Gastrocnemius medialis (tissue), 4 donors: ENCODE measurements at regions of chr12 and their contacts with region 1.

Region 1: DNA sequence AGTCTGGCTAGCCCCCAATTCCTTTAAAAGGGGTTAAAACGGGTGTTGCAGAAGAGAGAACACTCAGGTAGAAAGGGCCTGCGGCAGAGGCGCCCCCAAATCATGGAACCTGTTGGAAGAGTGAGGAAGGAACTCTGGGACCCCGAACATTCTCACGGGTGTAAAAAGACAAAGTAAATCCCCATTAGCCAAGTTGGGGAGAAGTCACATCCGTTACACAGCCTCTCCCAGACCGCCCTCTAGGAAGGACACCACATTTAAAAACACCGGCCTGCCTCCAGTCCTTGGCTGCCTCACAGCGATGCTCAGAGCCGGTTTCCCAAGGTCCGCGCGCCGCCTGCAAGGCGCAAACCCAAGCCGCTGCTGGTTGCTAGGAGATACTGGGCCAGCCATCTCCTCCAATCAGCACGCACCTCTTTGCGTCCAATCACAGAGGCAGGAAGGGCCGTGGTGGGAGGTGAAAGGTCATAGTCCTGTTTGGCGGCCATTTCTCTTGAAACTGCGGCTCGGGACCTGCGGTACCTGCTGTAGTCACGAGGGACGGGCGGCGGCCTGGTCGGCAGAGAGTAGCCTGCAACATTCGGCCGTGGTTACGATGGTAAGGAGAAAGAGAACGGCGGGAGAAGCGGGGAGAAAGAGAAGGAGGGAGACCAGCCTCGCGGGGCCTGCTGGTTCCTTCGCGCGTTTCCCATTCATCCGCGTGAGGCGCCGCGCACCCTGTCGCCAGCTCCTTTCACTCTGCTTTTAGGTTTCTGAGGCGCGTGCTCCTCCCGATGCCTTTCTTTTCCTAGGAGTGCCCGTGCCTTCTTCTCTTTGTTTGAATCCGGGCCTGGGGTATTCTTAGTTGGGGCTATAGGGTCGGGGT is at the start of gene SNRPF:
- DNase-seq: peak; percentile 94 to 95
- ATAC-seq: peak; percentile 100
- H3K4me3 ChIP-seq: peak within 1 kb of the TSS; percentile 68 to 80 (median 79)
- H3K27ac ChIP-seq: peak within 1 kb of the TSS; percentile 73 to 83 (median 78)
- H3K4me1 ChIP-seq: peaks cover 18% of the 10 kb centered on the region in 2 donors
- H3K27me3 ChIP-seq: no peaks in the 10 kb centered on the region
- CTCF ChIP-seq: peak in 3 of 5 experiments; percentile 18 to 35 (median 31)
- POLR2A ChIP-seq: peak in 1 of 2 donors; percentile 21
- total RNA-seq, gene SNRPF: 2.3 to 4.6 (median 3.4) TPM

Region 2: GRCh38 chr12:95820102-95820703 is 38.5 kb before region 1 on chr12:
- in situ Hi-C with region 1: no loop called
- intact Hi-C with region 1: loop called (anchors 1 kb)
- DNase-seq: no peak
- ATAC-seq: no peak
- H3K4me3 ChIP-seq: no peak overlapping the region
- H3K27ac ChIP-seq: no peak overlapping the region
- H3K4me1 ChIP-seq: no peaks in the 10 kb centered on the region
- H3K27me3 ChIP-seq: no peaks in the 10 kb centered on the region
- CTCF ChIP-seq: peak in 3 of 5 experiments; percentile 17 to 46 (median 45)
- POLR2A ChIP-seq: no peak

Region 3: DNA sequence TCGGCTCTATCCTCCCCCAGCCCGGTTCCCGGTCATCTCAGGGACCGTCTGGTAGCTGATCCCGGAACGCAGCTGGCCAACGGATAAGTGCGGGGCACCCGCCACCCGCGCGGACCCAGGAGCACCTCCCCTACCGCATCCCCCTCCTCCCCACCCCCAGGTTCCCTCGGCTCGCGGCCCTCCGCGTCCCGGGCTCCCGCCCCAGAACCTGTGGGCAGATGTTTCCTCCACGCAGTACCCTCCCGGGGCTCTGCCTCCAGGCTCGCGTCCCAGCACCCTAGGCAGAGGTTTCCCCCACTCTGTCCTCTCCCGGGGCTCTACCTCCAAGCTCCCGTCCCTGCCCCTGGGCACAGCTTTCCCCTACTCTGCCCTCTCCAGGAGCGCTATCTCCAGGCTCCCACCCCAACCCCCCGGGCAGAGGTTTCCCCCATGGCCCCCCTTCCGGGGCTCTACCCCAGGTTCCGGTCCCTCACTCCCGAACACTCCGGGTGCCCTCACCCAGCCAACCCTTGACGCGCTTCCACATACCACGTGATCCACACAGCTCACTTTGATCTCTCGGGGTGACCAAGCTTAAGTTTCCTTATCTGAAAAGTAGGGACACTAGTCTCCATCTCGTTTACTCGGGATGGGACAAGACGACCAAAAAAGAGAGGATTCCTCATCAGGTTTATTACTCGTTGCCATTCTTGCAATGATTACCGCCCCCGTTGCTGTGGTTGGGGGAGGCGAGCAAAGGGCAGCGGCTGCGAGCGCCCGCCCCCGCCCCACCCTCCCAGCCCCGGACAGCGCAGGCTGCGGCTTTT is 84.0 kb after region 1 on chr12 and contains the start of gene CCDC38:
- in situ Hi-C with region 1: no loop called
- intact Hi-C with region 1: loop called (anchors 2 kb)
- DNase-seq: peak; percentile 41 to 76
- ATAC-seq: peak; percentile 95 to 96
- H3K4me3 ChIP-seq: peak within 1 kb of the TSS; percentile 68 to 90 (median 74)
- H3K27ac ChIP-seq: peak within 1 kb of the TSS; percentile 79 to 88 (median 83)
- H3K4me1 ChIP-seq: peaks cover 4 to 9% of the 10 kb centered on the region in 2 donors
- H3K27me3 ChIP-seq: no peaks in the 10 kb centered on the region
- CTCF ChIP-seq: no peak
- POLR2A ChIP-seq: peak in 1 of 2 donors; percentile 25
- total RNA-seq, gene CCDC38: not detected

Region 4: GRCh38 chr12:96035278-96036236 is 176.8 kb after region 1 on chr12 and contains the start of gene LTA4H:
- in situ Hi-C with region 1: no loop called
- intact Hi-C with region 1: loop called (anchors 2 kb)
- DNase-seq: peak; percentile 94 to 96
- ATAC-seq: peak; percentile 96 to 98
- H3K4me3 ChIP-seq: peak within 1 kb of the TSS; percentile 69 to 97 (median 89)
- H3K27ac ChIP-seq: peak within 1 kb of the TSS; percentile 80 to 90 (median 84)
- H3K4me1 ChIP-seq: peaks cover 15 to 18% of the 10 kb centered on the region in 2 donors
- H3K27me3 ChIP-seq: no peaks in the 10 kb centered on the region
- CTCF ChIP-seq: no peak
- POLR2A ChIP-seq: peak; percentile 58 to 76
- total RNA-seq, gene LTA4H: 36.7 to 46.9 (median 40.6) TPM

Region 5: DNA sequence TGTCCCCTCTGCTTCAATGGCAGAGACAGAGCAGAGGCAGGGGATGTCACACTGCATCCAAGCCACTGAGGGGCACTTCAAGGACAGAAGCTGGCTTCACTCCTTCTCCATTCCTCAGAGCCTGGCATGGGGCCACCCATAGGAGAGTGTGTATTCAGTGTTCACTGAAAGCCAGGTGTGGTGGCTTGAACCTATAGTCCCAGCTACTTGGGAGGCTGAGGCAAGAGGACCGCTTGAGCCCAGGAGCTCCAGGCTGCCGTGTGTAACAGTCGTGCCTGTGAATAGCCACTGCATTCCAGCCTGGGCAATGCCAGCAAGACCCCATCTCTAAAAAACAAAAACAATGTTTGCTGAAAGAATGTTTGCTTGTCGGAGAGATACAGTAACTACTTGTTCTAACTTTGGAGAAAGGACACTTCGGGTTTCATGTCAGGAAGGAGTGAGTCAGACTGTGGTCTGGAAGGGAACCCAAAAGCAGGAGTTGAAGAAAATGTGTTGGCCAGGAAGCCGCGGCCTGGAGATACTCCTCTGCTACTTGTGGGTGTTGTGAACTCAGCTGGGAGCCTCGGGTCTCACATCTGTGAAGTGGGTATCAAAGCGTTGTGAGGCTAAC is 378.9 kb after region 1 on chr12:
- in situ Hi-C with region 1: no loop called
- intact Hi-C with region 1: loop called (anchors 10 kb)
- DNase-seq: peak; percentile 36 to 54
- ATAC-seq: peak; percentile 47 to 65
- H3K4me3 ChIP-seq: peak overlapping the region in 1 of 4 donors; percentile 6
- H3K27ac ChIP-seq: peak overlapping the region; percentile 43 to 69 (median 64)
- H3K4me1 ChIP-seq: peaks cover 42 to 62% of the 10 kb centered on the region in 2 donors
- H3K27me3 ChIP-seq: peaks cover 9 to 15% (median 13%) of the 10 kb centered on the region in 3 donors
- CTCF ChIP-seq: no peak
- POLR2A ChIP-seq: no peak